ENCODE measurements at regions of chr2 and their contacts with region 1.

Region 1: GRCh38 chr2:149597668-149598326 is 10.2 kb upstream of the MMADHC start:
- DNase-seq: peak; percentile 24 to 37
- H3K4me3 ChIP-seq: no peak overlapping the region
- H3K27ac ChIP-seq: no peak overlapping the region
- H3K4me1 ChIP-seq: peaks cover 0 to 2% of the 10 kb centered on the region in 2 donors
- H3K27me3 ChIP-seq: no peaks in the 10 kb centered on the region
- CTCF ChIP-seq: peak; percentile 71 to 83 (median 82)
- POLR2A ChIP-seq: no peak

Region 2: GRCh38 chr2:149490296-149490695 is 107.5 kb before region 1 on chr2:
- intact Hi-C with region 1: no loop called
- DNase-seq: no peak
- H3K4me3 ChIP-seq: no peak overlapping the region
- H3K27ac ChIP-seq: no peak overlapping the region
- H3K4me1 ChIP-seq: no peaks in the 10 kb centered on the region
- H3K27me3 ChIP-seq: no peaks in the 10 kb centered on the region
- CTCF ChIP-seq: no peak
- POLR2A ChIP-seq: no peak

Region 3: GRCh38 chr2:151238527-151239487 is 1641.0 kb after region 1 on chr2:
- intact Hi-C with region 1: loop called (anchors 10 kb)
- DNase-seq: peak; percentile 53 to 75
- H3K4me3 ChIP-seq: no peak overlapping the region
- H3K27ac ChIP-seq: no peak overlapping the region
- H3K4me1 ChIP-seq: no peaks in the 10 kb centered on the region
- H3K27me3 ChIP-seq: no peaks in the 10 kb centered on the region
- CTCF ChIP-seq: peak; percentile 83 to 90 (median 89)
- POLR2A ChIP-seq: no peak